B cell (primary cell): ENCODE measurements at regions of chr3 and their contacts with region 1.

Region 1: GRCh38 chr3:39107388-39108199 is at the starts of genes GORASP1 and TTC21A:
- DNase-seq: peak; percentile 80
- ATAC-seq: peak; percentile 48
- H3K4me3 ChIP-seq: peak within 1 kb of the TSS; percentile 63 to 99 (median 96)
- H3K4me3 Mint-ChIP-seq: peak within 1 kb of the TSS; percentile 93
- H3K27ac ChIP-seq: peak within 1 kb of the TSS; percentile 63 to 88
- H3K27ac Mint-ChIP-seq: peak within 1 kb of the TSS; percentile 90
- H3K4me1 ChIP-seq: peaks cover 41 to 54% of the 10 kb centered on the region in 2 donors
- H3K4me1 Mint-ChIP-seq: peaks cover 62% of the 10 kb centered on the region
- H3K27me3 ChIP-seq: no peaks in the 10 kb centered on the region
- H3K27me3 Mint-ChIP-seq: no peaks in the 10 kb centered on the region
- CTCF ChIP-seq: no peak
- total RNA-seq, gene GORASP1: 84.0 and 97.5 TPM in 2 replicates
- total RNA-seq, gene TTC21A: 106 and 116 TPM in 2 replicates

Region 2: GRCh38 chr3:38117748-38118420 is 989.7 kb before region 1 on chr3:
- CTCF ChIA-PET with region 1: no interaction called
- POLR2A ChIA-PET with region 1: no interaction called
- intact Hi-C with region 1: no loop called
- DNase-seq: peak; percentile 71
- ATAC-seq: peak; percentile 84
- H3K4me3 ChIP-seq: no peak overlapping the region
- H3K4me3 Mint-ChIP-seq: no peak overlapping the region
- H3K27ac ChIP-seq: no peak overlapping the region
- H3K27ac Mint-ChIP-seq: no peak overlapping the region
- H3K4me1 ChIP-seq: peaks cover 19 to 23% of the 10 kb centered on the region in 2 donors
- H3K4me1 Mint-ChIP-seq: peaks cover 22% of the 10 kb centered on the region
- H3K27me3 ChIP-seq: no peaks in the 10 kb centered on the region
- H3K27me3 Mint-ChIP-seq: peaks cover 7% of the 10 kb centered on the region
- CTCF ChIP-seq: peak; percentile 81

Region 3: GRCh38 chr3:39051647-39052561 is 55.7 kb before region 1 on chr3 and contains the starts of genes SCN11A and WDR48:
- CTCF ChIA-PET with region 1: no interaction called
- POLR2A ChIA-PET with region 1: no interaction called
- intact Hi-C with region 1: loop called (anchors 1 kb)
- DNase-seq: peak; percentile 94
- ATAC-seq: peak; percentile 94
- H3K4me3 ChIP-seq: peak within 1 kb of the TSS; percentile 72 to 93 (median 87)
- H3K4me3 Mint-ChIP-seq: peak within 1 kb of the TSS; percentile 97
- H3K27ac ChIP-seq: peak within 1 kb of the TSS; percentile 87 to 98
- H3K27ac Mint-ChIP-seq: peak within 1 kb of the TSS; percentile 98
- H3K4me1 ChIP-seq: peaks cover 11 to 15% of the 10 kb centered on the region in 2 donors
- H3K4me1 Mint-ChIP-seq: peaks cover 44% of the 10 kb centered on the region
- H3K27me3 ChIP-seq: no peaks in the 10 kb centered on the region
- H3K27me3 Mint-ChIP-seq: no peaks in the 10 kb centered on the region
- CTCF ChIP-seq: no peak
- total RNA-seq, gene SCN11A: 0.24 and 0.25 TPM in 2 replicates
- total RNA-seq, gene WDR48: 67.6 and 68.6 TPM in 2 replicates

Region 4: DNA sequence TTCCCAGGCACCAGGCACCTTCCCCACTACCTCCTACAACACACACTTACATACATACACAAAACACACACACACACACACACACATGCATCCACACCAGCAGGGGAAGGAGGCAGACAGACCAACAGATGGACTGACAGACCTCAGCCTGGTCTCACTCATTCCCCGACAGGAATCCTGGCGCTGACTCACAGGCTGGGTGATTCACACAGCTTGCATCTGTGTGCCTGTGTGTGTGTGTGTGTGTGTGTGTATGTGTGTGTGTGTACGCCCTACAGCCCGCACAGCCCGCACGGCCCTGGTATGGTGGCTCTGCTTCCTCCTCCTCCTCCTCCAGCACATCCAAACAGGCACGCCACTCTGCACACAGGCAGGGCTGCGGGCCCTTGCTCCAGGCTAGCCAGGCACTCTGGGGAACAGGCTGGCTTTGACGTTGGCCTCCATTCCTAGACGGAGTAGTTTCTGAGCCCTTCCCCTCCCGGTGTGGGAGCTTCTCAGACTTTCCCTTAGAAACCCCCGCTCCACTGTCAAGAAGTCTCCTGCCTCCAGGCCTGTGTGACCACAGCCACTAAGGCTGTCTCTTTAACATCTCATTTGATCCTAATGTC is 39.5 kb after region 1 on chr3:
- CTCF ChIA-PET with region 1: interaction called, 26 read pairs
- POLR2A ChIA-PET with region 1: interaction called, 10 read pairs
- intact Hi-C with region 1: loop called (anchors 1 kb)
- DNase-seq: peak; percentile 56
- ATAC-seq: peak; percentile 16
- H3K4me3 ChIP-seq: peak overlapping the region; percentile 11 to 61 (median 48)
- H3K4me3 Mint-ChIP-seq: peak overlapping the region; percentile 99
- H3K27ac ChIP-seq: peak overlapping the region; percentile 87 to 98
- H3K27ac Mint-ChIP-seq: peak overlapping the region; percentile 94
- H3K4me1 ChIP-seq: peaks cover 71 to 73% of the 10 kb centered on the region in 2 donors
- H3K4me1 Mint-ChIP-seq: peaks cover 82% of the 10 kb centered on the region
- H3K27me3 ChIP-seq: no peaks in the 10 kb centered on the region
- H3K27me3 Mint-ChIP-seq: no peaks in the 10 kb centered on the region
- CTCF ChIP-seq: no peak

Region 5: GRCh38 chr3:39255503-39256325 is 148.1 kb after region 1 on chr3:
- CTCF ChIA-PET with region 1: no interaction called
- POLR2A ChIA-PET with region 1: interaction called, 3 read pairs
- intact Hi-C with region 1: loop called (anchors 1 kb)
- DNase-seq: peak; percentile 90
- ATAC-seq: peak; percentile 97
- H3K4me3 ChIP-seq: peak overlapping the region in 2 of 5 experiments; percentile 21 to 35
- H3K4me3 Mint-ChIP-seq: peak overlapping the region; percentile 81
- H3K27ac ChIP-seq: peak overlapping the region; percentile 77 to 79
- H3K27ac Mint-ChIP-seq: peak overlapping the region; percentile 97
- H3K4me1 ChIP-seq: peaks cover 79 to 82% of the 10 kb centered on the region in 2 donors
- H3K4me1 Mint-ChIP-seq: peaks cover 82% of the 10 kb centered on the region
- H3K27me3 ChIP-seq: peaks cover 0 to 3% (median 0%) of the 10 kb centered on the region in 4 experiments
- H3K27me3 Mint-ChIP-seq: peaks cover 4% of the 10 kb centered on the region
- CTCF ChIP-seq: no peak